Psoas muscle (tissue), 8 donors: ENCODE measurements at regions of chr7 and their contacts with region 1.

Region 1: DNA sequence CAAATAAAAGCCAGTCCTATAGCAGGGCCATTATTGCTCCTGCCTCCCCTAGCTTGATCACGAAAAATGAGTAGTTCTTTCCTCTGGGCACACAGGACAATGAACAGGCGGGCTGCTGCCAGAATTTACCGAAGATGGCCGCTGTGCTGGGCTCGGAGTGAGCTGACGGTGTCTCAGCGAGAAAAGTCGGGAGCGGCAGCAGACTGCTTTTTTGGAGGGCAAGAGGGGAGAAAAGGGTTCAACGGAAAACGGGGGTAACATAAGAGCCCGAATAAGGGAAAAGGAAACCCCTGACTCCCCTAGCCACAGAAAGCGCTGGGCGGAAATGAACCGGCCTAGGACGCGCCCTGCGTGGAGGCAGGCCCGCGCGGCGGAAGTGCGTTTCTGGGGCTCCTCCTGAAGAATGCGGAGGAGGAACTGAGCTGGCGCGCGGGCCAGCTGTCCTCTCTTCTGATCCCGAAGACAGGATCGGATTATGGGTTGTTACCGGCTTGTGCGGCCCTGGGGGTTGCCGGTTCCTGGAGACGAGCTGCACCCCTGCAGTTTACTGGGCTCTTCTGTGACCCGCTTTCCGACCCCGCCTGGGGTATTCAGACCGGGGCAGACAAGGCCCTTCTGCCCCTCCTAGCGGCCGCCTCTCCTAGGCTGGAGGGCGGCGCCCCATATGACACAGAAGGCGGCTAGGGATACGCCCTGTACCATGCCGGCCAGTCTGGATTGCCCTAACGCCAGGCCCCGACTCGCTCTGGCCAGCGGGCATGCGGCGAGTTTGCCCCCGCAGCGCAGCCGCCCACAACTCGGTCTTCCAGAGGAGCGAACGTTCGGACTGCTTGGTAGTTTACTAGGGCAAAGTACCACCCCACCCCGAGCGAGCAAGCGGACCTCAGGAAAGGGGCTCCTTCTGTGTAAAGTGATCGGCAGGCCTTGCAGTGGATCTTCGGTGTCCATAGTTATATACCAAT is 30.1 kb upstream of the KMT2E start:
- DNase-seq: peak; percentile 90 to 94
- ATAC-seq: peak; percentile 89 to 91 (median 90)
- H3K4me3 ChIP-seq: peak overlapping the region; percentile 69
- H3K27ac ChIP-seq: no peak overlapping the region
- H3K4me1 ChIP-seq: peaks cover 42% of the 10 kb centered on the region
- H3K27me3 ChIP-seq: no peaks in the 10 kb centered on the region
- CTCF ChIP-seq: peak; percentile 58

Region 2: DNA sequence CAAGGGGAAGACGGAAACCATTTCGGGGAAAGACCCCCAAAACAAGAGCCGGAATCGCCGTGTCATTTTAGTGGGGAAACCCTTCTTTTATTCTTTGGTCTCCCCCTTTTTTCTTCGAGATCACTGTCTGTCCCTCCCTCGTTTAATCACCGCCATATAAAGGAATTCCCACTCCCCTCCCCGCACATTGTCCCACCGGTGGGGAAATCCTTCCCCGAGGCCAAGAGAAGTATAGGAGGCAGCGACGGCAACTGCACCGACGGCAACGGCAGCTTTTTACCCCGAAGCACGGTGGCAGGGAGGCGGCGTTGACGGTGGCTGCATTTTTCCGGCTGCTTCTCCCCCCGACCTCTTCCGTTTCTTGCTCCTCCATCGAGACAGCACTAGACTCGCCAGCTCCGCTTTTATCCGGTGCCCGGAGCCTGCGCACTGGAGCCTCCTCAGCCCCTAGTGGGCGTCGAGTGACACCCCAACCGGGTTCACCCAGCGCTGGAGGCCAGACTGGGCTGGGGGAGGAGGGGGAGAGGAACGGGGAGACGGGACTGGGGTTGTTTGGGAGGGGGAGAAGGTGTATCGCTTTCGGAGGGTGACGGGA is 29.5 kb after region 1 on chr7:
- intact Hi-C with region 1: loop called (anchors 2 kb)
- DNase-seq: peak; percentile 95 to 99
- ATAC-seq: peak; percentile 81 to 86 (median 84)
- H3K4me3 ChIP-seq: peak overlapping the region; percentile 92
- H3K27ac ChIP-seq: peak overlapping the region; percentile 100
- H3K4me1 ChIP-seq: peaks cover 35% of the 10 kb centered on the region
- H3K27me3 ChIP-seq: no peaks in the 10 kb centered on the region
- CTCF ChIP-seq: peak; percentile 45

Region 3: DNA sequence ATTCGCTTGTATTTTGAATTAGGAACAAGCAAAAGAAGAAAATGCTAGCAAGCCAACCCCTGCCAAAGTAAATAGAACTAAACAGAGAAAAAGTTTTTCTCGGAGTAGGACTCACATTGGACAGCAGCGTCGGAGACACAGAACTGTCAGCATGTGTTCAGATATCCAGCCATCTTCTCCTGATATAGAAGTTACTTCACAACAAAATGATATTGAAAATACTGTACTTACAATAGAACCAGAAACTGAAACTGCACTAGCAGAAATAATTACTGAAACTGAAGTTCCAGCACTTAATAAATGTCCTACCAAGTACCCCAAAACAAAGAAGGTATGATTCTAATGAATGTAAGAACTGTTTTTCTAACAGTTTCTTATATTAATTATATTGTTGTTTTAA is 118.0 kb after region 1 on chr7:
- intact Hi-C with region 1: loop called in 1 of 2 experiments (anchors 5 kb)
- DNase-seq: no peak
- ATAC-seq: no peak
- H3K4me3 ChIP-seq: no peak overlapping the region
- H3K27ac ChIP-seq: no peak overlapping the region
- H3K4me1 ChIP-seq: peaks cover 29% of the 10 kb centered on the region
- H3K27me3 ChIP-seq: no peaks in the 10 kb centered on the region
- CTCF ChIP-seq: no peak

Region 4: GRCh38 chr7:105268511-105269392 is 284.9 kb after region 1 on chr7:
- intact Hi-C with region 1: loop called in 1 of 2 experiments (anchors 10 kb)
- DNase-seq: no peak
- ATAC-seq: peak; percentile 86 to 93 (median 89)
- H3K4me3 ChIP-seq: peak overlapping the region; percentile 73
- H3K27ac ChIP-seq: peak overlapping the region; percentile 90
- H3K4me1 ChIP-seq: peaks cover 24% of the 10 kb centered on the region
- H3K27me3 ChIP-seq: no peaks in the 10 kb centered on the region
- CTCF ChIP-seq: no peak

Region 5: GRCh38 chr7:105336009-105336408 is 352.1 kb after region 1 on chr7:
- intact Hi-C with region 1: loop called (anchors 10 kb)
- DNase-seq: no peak
- ATAC-seq: no peak
- H3K4me3 ChIP-seq: no peak overlapping the region
- H3K27ac ChIP-seq: no peak overlapping the region
- H3K4me1 ChIP-seq: peaks cover 22% of the 10 kb centered on the region
- H3K27me3 ChIP-seq: no peaks in the 10 kb centered on the region
- CTCF ChIP-seq: peak; percentile 50